Posterior vena cava (tissue), 2 donors: ENCODE measurements at regions of chr13 and their contacts with region 1.

Region 1: DNA sequence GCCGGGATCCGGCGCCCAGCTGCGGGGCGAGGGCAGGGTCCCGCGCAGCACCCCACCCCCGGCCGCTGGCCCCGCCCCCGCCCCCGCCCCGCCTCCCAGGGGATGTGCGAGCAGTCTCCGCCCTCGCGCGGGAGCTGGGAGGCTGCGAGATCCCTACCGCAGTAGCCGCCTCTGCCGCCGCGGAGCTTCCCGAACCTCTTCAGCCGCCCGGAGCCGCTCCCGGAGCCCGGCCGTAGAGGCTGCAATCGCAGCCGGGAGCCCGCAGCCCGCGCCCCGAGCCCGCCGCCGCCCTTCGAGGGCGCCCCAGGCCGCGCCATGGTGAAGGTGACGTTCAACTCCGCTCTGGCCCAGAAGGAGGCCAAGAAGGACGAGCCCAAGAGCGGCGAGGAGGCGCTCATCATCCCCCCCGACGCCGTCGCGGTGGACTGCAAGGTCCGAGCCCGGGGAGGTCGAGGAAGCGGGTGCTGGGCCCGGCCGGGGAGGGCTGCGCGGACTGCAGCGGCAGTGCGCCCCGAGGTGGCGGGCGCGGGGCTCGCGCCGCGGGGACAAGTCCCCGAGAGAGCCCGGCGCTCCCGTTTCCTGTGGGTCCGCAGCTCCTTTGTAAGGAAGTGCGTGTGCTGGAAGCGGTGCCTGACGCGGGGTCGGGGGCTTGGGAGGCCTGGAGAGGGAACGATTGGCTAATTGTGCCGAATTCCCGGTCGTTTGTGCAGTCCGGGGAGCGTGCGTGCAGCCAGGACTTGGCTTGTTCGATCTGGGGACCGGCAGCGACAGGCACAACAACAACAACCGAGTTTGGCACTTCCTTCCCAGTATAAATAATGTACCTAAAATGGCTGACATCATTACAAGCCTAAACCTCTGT is at the start of gene ITM2B:
- DNase-seq: peak; percentile 95
- total RNA-seq, gene ITM2B: 425 to 605 TPM

Region 2: GRCh38 chr13:48303359-48304142 is 70.3 kb after region 1 on chr13 and contains the start of gene RB1:
- intact Hi-C with region 1: loop called in 1 of 2 experiments (anchors 10 kb)
- DNase-seq: peak; percentile 98
- total RNA-seq, gene RB1: 33.3 to 35.9 TPM